Sigmoid colon (tissue), 7 donors: ENCODE measurements at regions of chr11 and their contacts with region 1.

Region 1: GRCh38 chr11:96242971-96243647 is 99.9 kb downstream of the MAML2 start:
- DNase-seq: peak; percentile 98
- H3K4me3 ChIP-seq: peak overlapping the region; percentile 24 to 49 (median 39)
- H3K27ac ChIP-seq: peak overlapping the region; percentile 68 to 87 (median 86)
- H3K4me1 ChIP-seq: peaks cover 0 to 32% (median 27%) of the 10 kb centered on the region in 4 donors
- H3K27me3 ChIP-seq: no peaks in the 10 kb centered on the region
- CTCF ChIP-seq: no peak
- EP300 ChIP-seq: peak in 2 of 4 donors; percentile 23 to 68
- POLR2A ChIP-seq: no peak

Region 2: GRCh38 chr11:95715777-95716241 is 527.3 kb before region 1 on chr11:
- intact Hi-C with region 1: no loop called
- DNase-seq: no peak
- H3K4me3 ChIP-seq: no peak overlapping the region
- H3K27ac ChIP-seq: no peak overlapping the region
- H3K4me1 ChIP-seq: no peaks in the 10 kb centered on the region
- H3K27me3 ChIP-seq: no peaks in the 10 kb centered on the region
- CTCF ChIP-seq: no peak
- EP300 ChIP-seq: no peak
- POLR2A ChIP-seq: no peak

Region 3: DNA sequence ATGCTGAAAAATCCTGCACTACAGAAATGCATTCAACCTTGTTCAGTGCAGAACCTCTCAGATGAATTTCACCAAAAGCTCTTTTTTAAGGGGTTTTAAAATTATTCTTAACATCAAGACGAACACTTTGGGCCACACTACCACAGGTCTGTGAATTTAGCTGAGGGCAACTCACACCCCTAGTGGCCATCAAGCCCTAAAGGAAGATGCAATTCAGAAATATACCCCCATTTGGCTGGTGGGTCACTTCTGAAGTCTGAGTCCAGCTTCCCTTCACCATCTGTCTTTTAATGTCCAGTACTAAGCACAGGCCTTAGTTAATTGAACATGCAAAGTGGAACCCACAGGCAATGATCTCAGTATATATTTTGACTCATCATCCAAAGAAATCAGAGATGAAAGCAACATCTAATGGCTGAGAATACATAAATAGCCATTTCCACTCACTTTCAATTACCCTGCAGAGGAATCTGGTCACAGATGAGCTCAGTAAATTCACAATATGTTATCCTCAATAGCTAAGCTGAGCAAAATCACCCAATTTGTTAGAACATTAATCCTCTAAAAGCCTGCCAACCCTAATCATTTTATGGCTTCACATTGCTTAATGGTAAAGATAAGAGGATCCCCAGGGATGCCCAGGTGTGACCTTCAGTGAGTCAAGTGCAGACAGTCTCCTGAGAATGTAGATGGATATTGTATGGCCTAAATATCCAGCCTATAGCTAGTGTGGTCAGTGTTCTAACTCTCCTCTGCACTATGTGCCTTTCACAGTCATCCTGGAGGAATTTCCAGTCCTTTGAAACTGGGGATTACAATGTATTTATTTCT is 503.8 kb before region 1 on chr11:
- intact Hi-C with region 1: no loop called
- DNase-seq: no peak
- H3K4me3 ChIP-seq: no peak overlapping the region
- H3K27ac ChIP-seq: no peak overlapping the region
- H3K4me1 ChIP-seq: no peaks in the 10 kb centered on the region
- H3K27me3 ChIP-seq: no peaks in the 10 kb centered on the region
- CTCF ChIP-seq: no peak
- EP300 ChIP-seq: no peak
- POLR2A ChIP-seq: no peak

Region 4: DNA sequence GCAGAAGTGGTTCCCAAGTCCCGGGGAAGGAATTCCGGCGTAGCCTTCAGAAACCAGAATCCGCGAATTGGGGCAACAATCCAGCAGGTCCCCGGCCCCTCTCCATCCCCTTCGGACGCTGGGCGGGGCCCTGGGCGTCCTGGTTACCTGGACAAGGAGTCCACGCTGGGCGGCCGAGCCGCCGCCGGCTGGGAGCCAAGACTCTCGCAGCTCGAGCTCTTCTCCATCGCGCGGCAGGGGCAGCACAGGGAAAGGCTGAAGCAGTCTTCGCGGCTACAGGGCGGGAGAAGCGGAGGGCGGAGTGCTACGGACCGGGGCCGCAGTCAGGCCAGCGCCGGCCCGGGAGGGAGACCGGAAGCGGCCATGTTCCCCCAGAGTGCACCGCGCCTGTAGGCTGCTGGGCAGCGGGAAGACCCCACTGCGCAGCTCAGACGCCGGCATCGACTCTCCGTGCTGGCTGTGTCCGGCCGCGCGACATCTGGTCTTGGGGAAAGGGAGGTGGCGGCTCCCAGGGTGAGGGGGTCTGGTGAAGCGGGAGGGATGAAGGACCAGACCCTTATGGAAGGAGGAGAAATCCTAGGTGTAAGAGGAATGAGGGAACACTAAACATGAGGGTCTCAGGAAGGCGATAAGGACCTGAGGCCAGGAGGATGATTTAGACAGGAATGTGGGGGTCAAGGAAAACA is 319.2 kb before region 1 on chr11 and contains the start of gene MTMR2:
- intact Hi-C with region 1: loop called (anchors 10 kb)
- DNase-seq: peak; percentile 87
- H3K4me3 ChIP-seq: peak within 1 kb of the TSS; percentile 65 to 78 (median 70)
- H3K27ac ChIP-seq: peak within 1 kb of the TSS; percentile 89 to 96 (median 91)
- H3K4me1 ChIP-seq: peaks cover 0 to 24% (median 16%) of the 10 kb centered on the region in 4 donors
- H3K27me3 ChIP-seq: no peaks in the 10 kb centered on the region
- CTCF ChIP-seq: no peak
- EP300 ChIP-seq: no peak
- POLR2A ChIP-seq: peak; percentile 64 to 72
- total RNA-seq, gene MTMR2: 17.6 to 33.7 (median 24.0) TPM

Region 5: GRCh38 chr11:96306933-96307775 is 64.0 kb after region 1 on chr11:
- intact Hi-C with region 1: loop called (anchors 5 kb)
- DNase-seq: peak; percentile 90
- H3K4me3 ChIP-seq: peak overlapping the region; percentile 4 to 35 (median 28)
- H3K27ac ChIP-seq: peak overlapping the region; percentile 69 to 86 (median 80)
- H3K4me1 ChIP-seq: peaks cover 0 to 60% (median 52%) of the 10 kb centered on the region in 4 donors
- H3K27me3 ChIP-seq: no peaks in the 10 kb centered on the region
- CTCF ChIP-seq: no peak
- EP300 ChIP-seq: no peak
- POLR2A ChIP-seq: no peak